ENCODE measurements at regions of chr14 and their contacts with region 1.

Region 1: DNA sequence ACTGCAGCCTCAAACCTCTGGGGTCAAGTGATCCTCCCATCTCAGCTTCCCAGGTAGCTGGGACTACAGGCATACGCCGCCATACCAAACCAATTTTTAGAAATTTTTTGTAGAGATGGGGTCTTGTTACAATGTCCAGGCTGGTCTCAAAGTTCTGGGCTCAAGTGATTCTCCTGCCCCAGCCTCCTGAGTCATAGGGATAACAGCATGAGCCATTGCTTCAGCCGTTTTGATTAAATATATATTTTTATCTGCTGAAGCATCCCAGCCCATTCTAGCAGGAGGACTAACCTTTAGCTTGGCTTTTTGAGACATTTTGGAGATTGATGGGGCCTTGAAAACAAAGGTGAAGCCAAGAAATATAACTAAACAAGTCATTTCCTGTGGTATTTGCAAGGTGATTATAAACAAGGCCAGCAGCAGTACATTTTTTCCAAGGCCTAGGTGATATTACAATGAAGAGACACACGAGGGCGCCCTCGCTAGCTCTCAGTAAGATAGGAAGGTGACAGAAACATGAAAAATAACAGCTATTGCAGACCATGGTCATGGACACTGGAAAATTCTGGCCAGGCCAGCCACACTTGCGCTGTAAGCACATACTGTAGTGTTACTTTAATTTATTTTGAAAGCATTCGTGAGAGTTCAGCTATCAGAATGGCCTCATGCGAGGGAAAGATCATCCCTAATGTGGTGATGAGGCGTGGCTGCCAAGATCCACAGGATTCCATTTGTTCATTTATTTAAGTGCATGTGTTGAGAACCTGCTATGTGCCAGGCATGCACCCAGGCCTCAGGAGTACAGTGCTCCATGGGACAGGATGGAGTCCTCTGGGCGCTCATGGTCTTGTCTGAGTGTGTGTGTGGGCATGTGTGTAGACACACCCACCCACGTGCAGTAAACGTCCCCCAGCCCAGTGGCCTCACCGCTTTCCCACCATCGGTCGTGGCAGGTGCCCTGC is 63.5 kb downstream of the DGLUCY start:
- DNase-seq: peak in 1 of 5 donors; percentile 40
- H3K4me3 ChIP-seq: no peak overlapping the region
- H3K27ac ChIP-seq: no peak overlapping the region
- H3K4me1 ChIP-seq: no peaks in the 10 kb centered on the region
- H3K27me3 ChIP-seq: no peaks in the 10 kb centered on the region
- CTCF ChIP-seq: peak in 2 of 3 donors; percentile 29 to 39
- EP300 ChIP-seq: no peak
- POLR2A ChIP-seq: no peak

Region 2: DNA sequence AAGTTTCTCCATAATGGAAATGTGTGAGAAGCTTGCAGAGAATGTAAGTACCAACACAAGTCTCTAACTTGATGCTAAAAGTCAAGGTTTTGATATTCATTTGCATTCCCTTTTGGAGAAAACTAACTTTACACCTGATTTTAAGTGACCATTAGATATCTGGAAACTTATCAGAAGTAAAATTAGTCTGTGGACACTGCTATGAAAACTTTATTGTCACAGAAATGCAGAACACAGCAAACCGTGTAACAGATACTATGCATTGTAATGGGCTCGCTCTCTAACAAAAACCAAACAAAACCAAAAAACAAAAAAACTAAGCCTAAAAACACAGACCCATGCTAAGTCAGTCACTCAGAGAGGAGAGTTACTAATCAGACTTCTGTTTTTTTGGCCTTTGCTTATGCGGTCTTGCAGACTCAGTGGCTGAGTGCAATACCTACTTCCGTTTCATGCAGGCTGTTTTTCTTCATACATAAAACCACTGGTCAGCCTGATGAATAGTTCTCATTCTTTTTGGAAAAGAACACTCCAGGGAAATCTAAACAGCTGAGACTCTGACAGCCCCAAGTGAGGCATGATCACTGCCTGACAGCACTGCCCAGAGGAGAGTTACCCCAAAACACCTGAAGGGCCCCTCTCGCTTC is 881.4 kb before region 1 on chr14:
- intact Hi-C with region 1: loop called in 1 of 4 experiments (anchors 10 kb)
- DNase-seq: no peak
- H3K4me3 ChIP-seq: no peak overlapping the region
- H3K27ac ChIP-seq: no peak overlapping the region
- H3K4me1 ChIP-seq: no peaks in the 10 kb centered on the region
- H3K27me3 ChIP-seq: no peaks in the 10 kb centered on the region
- CTCF ChIP-seq: no peak
- EP300 ChIP-seq: no peak
- POLR2A ChIP-seq: no peak

Region 3: DNA sequence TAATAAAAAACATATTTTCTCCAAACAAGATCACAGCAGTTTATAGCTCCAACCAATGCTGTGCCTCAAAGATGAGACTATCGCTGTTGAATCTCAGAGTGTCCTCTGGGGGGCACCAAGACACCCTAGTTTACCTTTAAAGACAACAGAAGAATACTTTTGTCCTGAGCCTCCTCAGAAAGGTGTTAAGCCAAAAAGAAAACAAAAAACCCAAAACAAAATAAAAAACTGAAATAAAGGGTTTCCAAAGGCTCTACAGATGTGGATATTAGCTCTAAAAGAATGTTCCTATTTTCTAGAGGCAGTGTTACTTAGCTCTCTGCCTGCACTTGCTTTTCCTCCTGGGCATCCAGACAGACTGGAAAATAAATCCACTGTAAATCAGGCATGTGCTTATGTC is 274.3 kb before region 1 on chr14:
- intact Hi-C with region 1: loop called (anchors 2 to 5 kb)
- DNase-seq: peak; percentile 38 to 71 (median 48)
- H3K4me3 ChIP-seq: no peak overlapping the region
- H3K27ac ChIP-seq: no peak overlapping the region
- H3K4me1 ChIP-seq: no peaks in the 10 kb centered on the region
- H3K27me3 ChIP-seq: no peaks in the 10 kb centered on the region
- CTCF ChIP-seq: peak in 2 of 3 donors; percentile 56 to 77
- EP300 ChIP-seq: no peak
- POLR2A ChIP-seq: no peak

Region 4: DNA sequence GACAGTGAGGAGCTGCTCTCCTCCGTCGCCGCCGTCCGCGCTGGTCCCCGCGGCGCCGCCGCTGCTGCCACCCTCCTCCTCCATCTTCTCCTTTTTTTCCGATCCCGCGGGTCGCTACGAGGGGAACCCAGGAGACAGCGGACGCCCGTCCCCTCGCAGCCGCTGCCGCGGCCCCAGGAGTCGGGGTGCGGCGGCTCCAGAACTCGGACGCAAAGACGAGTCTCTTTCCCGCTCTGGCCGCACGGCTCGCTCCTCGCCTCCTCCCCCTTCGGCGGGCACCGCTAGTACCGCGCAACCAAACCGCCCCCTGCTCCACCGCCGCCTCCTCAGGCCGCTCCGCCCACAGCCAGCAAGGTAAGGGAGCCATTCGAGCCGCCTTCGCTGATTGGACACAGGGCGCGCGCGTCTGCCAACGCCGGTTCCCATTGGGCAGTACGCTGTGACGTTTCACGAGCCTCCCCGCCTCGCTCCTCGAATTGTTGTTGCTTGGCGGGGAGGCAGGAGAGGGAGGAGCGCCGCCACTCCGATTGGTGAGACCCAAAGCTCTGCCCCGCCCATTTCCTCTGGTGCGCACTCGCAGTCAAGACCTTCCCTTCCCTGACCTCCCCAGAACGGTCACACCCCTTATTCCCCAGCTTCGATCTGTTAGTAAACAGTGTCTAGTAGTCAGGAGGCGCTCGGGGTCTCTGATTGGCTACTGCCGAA is 116.9 kb before region 1 on chr14 and contains the start of gene RPS6KA5:
- intact Hi-C with region 1: loop called in 1 of 4 experiments (anchors 5 kb)
- DNase-seq: peak; percentile 100
- H3K4me3 ChIP-seq: peak within 1 kb of the TSS; percentile 95
- H3K27ac ChIP-seq: peak within 1 kb of the TSS; percentile 98
- H3K4me1 ChIP-seq: peaks cover 1% of the 10 kb centered on the region
- H3K27me3 ChIP-seq: no peaks in the 10 kb centered on the region
- CTCF ChIP-seq: peak; percentile 17 to 64 (median 47)
- EP300 ChIP-seq: no peak
- POLR2A ChIP-seq: peak; percentile 95
- total RNA-seq, gene RPS6KA5: 6.7 to 19.0 (median 10.3) TPM

Region 5: DNA sequence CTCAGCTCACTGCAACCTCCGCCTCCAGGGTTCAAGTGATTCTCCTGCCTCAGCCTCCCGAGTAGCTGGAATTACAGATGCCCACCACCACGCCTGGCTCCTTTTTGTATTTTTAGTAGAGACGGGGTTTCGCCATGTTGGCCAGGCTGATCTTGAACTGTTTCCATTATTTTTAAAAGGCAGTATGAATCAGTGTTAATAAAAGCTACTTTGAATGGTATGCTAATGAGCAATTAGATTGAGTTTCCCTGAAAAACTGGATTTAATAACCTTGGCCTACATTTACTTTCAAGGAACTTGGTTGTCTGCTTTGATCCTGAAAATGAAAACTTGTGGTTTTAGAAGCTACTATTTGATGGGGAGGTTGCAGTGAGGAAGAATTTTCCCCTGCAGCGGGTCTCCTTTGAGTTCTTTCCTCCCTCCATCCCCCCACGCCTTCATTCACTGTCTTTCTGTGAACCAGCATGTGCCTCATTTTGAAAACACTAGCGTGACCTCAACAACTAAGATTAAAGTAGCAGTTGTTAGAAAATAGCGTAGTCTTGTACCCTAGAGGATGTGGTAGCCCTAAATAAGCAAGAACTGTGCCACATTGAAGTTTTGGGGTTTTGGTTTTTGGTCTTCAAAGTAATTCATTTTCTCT is 99.1 kb before region 1 on chr14:
- intact Hi-C with region 1: no loop called
- DNase-seq: no peak
- H3K4me3 ChIP-seq: no peak overlapping the region
- H3K27ac ChIP-seq: no peak overlapping the region
- H3K4me1 ChIP-seq: no peaks in the 10 kb centered on the region
- H3K27me3 ChIP-seq: no peaks in the 10 kb centered on the region
- CTCF ChIP-seq: no peak
- EP300 ChIP-seq: no peak
- POLR2A ChIP-seq: no peak